GM12878 (cell line): ENCODE measurements at regions of chr1 and their contacts with region 1.

Region 1: DNA sequence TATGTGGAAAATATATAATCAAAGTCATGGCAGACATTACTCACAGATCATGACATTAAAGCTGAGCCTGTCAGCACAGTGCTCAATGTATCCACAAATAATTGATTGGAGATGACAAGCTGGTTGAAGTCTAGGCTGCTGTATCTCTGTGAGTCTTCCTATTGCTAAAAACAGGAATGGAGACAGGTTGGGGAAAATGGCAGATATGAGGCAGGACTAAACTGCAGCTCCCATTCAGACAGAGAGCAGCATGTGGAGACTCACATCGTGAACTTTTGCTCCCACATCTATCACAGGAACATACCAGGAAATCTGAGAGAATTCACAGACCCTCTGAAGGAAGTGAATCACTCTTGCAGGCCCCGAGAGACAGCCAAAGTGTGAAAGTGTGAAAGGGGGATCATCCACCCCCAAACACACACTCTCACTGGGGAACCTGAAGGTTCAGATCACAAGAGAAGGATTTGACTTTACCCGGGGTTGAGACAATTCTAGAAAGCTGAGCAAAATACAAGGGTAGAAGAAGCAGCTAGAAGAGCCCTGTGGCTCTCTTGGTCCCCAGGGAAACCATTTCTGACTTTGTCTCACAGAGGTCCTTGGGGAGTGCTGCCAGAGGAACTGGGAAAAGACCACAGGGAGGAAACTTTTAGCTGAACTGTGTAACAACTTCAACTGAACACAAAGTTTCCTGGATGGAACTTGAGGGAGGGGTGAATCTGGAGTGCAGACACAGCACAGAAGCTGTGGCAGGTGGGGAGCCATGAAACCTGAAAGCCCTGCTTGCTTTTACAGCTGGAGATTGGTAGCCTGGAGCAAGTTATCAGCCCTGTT is 173.4 kb downstream of the S1PR1 start:
- DNase-seq: peak; percentile 99
- ATAC-seq: peak; percentile 64
- H3K4me3 ChIP-seq: no peak overlapping the region
- H3K27ac ChIP-seq: peak overlapping the region; percentile 98
- H3K4me1 ChIP-seq: peaks cover 51% of the 10 kb centered on the region
- H3K27me3 ChIP-seq: no peaks in the 10 kb centered on the region
- CTCF ChIP-seq: no peak
- EP300 ChIP-seq: peak in 1 of 2 experiments; percentile 67; a peak in 1 of 4 replicates
- POLR2A ChIP-seq: peak; percentile 59
- RAD21 ChIP-seq: peak; percentile 42; the same call in 1 of the 2 replicates

Region 2: GRCh38 chr1:101293461-101294051 is 116.7 kb before region 1 on chr1:
- CTCF ChIA-PET with region 1: interaction called, 15 read pairs
- POLR2A ChIA-PET with region 1: interaction called, 7 read pairs
- RAD21 ChIA-PET with region 1: interaction called, 117 read pairs
- SMC1A ChIA-PET with region 1: interaction called, 107 read pairs
- in situ Hi-C with region 1: no loop called
- intact Hi-C with region 1: loop called (anchors 1 kb)
- DNase-seq: peak; percentile 95
- ATAC-seq: peak; percentile 76
- H3K4me3 ChIP-seq: no peak overlapping the region; the same call in 1 of the 2 replicates
- H3K27ac ChIP-seq: peak overlapping the region; percentile 54
- H3K4me1 ChIP-seq: peaks cover 34% of the 10 kb centered on the region
- H3K27me3 ChIP-seq: no peaks in the 10 kb centered on the region
- CTCF ChIP-seq: no peak
- EP300 ChIP-seq: peak in 1 of 2 experiments; percentile 91; a peak in 3 of 4 replicates
- POLR2A ChIP-seq: no peak
- RAD21 ChIP-seq: 0 out of 2 replicates have a peak, but pooled peaks have one; percentile 8

Region 3: GRCh38 chr1:101364370-101365120 is 45.7 kb before region 1 on chr1:
- CTCF ChIA-PET with region 1: interaction called, 29 read pairs
- POLR2A ChIA-PET with region 1: interaction called, 23 read pairs
- RAD21 ChIA-PET with region 1: interaction called, 219 read pairs
- SMC1A ChIA-PET with region 1: interaction called, 618 read pairs
- in situ Hi-C with region 1: no loop called
- intact Hi-C with region 1: no loop called
- DNase-seq: no peak
- ATAC-seq: peak; percentile 68
- H3K4me3 ChIP-seq: no peak overlapping the region
- H3K27ac ChIP-seq: peak overlapping the region; percentile 83
- H3K4me1 ChIP-seq: peaks cover 29% of the 10 kb centered on the region
- H3K27me3 ChIP-seq: no peaks in the 10 kb centered on the region
- CTCF ChIP-seq: no peak
- EP300 ChIP-seq: 0 out of 4 replicates have a peak, but pooled peaks of 1 of the 2 experiments have one; percentile 15
- POLR2A ChIP-seq: no peak
- RAD21 ChIP-seq: no peak

Region 4: DNA sequence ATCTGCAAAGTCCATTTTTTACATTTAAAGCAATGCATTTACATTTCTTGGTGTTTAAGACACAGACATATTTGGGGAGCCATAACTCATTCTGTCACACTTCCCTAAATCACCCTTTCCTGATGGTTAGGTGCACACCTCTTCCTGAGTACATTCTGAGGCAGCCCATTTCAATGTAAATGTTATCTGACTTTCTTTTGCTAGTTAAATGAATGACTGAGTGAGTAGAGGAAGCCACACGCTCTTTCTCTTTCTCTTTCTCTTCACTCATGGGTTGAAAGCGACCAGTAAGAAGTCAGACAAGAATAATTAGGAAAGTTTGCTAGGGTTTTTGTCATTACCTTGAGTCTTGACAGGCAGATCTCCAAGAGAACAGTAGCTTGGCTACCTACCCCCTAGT is 30.3 kb before region 1 on chr1:
- CTCF ChIA-PET with region 1: interaction called, 53 read pairs
- POLR2A ChIA-PET with region 1: interaction called, 74 read pairs
- RAD21 ChIA-PET with region 1: interaction called, 225 read pairs
- SMC1A ChIA-PET with region 1: interaction called, 618 read pairs
- in situ Hi-C with region 1: no loop called
- intact Hi-C with region 1: no loop called
- DNase-seq: peak; percentile 80
- ATAC-seq: peak; percentile 95
- H3K4me3 ChIP-seq: 0 out of 2 replicates have a peak overlapping the region, but pooled peaks have one; percentile 16
- H3K27ac ChIP-seq: peak overlapping the region; percentile 91
- H3K4me1 ChIP-seq: peaks cover 32% of the 10 kb centered on the region
- H3K27me3 ChIP-seq: no peaks in the 10 kb centered on the region
- CTCF ChIP-seq: no peak
- EP300 ChIP-seq: no peak
- POLR2A ChIP-seq: no peak
- RAD21 ChIP-seq: 0 out of 2 replicates have a peak, but pooled peaks have one; percentile 2

Region 5: GRCh38 chr1:101394041-101394440 is 16.2 kb before region 1 on chr1:
- CTCF ChIA-PET with region 1: interaction called, 71 read pairs
- POLR2A ChIA-PET with region 1: interaction called, 143 read pairs
- RAD21 ChIA-PET with region 1: interaction called, 225 read pairs
- SMC1A ChIA-PET with region 1: interaction called, 276 read pairs
- in situ Hi-C with region 1: no loop called
- intact Hi-C with region 1: loop called (anchors 1 kb)
- DNase-seq: no peak
- ATAC-seq: no peak
- H3K4me3 ChIP-seq: no peak overlapping the region
- H3K27ac ChIP-seq: no peak overlapping the region
- H3K4me1 ChIP-seq: peaks cover 23% of the 10 kb centered on the region
- H3K27me3 ChIP-seq: no peaks in the 10 kb centered on the region
- CTCF ChIP-seq: no peak
- EP300 ChIP-seq: no peak
- POLR2A ChIP-seq: no peak
- RAD21 ChIP-seq: no peak

Region 6: GRCh38 chr1:101420406-101420805 is 10.1 kb after region 1 on chr1:
- CTCF ChIA-PET with region 1: interaction called, 6 read pairs
- POLR2A ChIA-PET with region 1: interaction called, 6 read pairs
- RAD21 ChIA-PET with region 1: interaction called, 14 read pairs
- SMC1A ChIA-PET with region 1: interaction called, 81 read pairs
- in situ Hi-C with region 1: no loop called
- intact Hi-C with region 1: no loop called
- DNase-seq: no peak
- ATAC-seq: peak; percentile 18; the same call in 1 of the 3 replicates
- H3K4me3 ChIP-seq: no peak overlapping the region
- H3K27ac ChIP-seq: no peak overlapping the region
- H3K4me1 ChIP-seq: no peaks in the 10 kb centered on the region
- H3K27me3 ChIP-seq: no peaks in the 10 kb centered on the region
- CTCF ChIP-seq: no peak
- EP300 ChIP-seq: no peak
- POLR2A ChIP-seq: no peak
- RAD21 ChIP-seq: no peak

Region 7: DNA sequence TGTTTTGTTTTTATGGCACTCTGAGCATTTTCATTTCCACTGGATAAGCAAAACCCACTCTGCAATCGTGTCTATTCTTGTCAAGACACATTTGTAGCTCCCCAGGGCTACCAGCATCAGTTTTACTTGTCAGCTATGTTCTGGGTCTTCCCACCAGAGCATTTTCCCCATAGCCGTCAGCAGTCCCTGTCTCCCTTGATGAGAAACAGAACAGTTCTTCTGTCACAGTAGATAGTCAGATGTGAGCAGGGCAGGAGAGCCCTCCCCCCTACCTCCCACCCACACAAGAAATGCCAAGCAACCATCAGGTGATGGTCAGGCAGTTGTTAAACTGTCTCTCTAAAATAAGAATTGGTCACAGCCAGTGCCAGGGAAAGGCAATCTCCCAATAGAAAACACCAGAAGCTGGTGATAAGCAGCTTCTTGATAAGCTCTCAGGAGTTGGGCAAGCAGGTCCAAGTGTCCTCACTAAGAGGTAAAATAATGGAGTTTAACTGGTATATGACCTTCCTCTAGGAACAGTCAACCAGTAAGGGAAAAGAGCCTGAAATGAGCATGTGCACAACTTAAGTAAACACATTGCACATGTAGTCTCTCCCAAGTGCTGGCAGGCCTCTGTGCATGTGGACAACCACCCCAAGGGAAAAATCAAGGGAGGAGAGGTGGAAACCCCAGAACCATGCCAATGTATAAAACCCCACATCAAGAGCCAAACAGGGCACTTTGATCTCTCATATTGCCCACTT is 34.8 kb after region 1 on chr1:
- CTCF ChIA-PET with region 1: interaction called, 323 read pairs
- POLR2A ChIA-PET with region 1: interaction called, 209 read pairs
- RAD21 ChIA-PET with region 1: interaction called, 503 read pairs
- SMC1A ChIA-PET with region 1: interaction called, 507 read pairs
- in situ Hi-C with region 1: no loop called
- intact Hi-C with region 1: no loop called
- DNase-seq: no peak
- ATAC-seq: peak; percentile 33
- H3K4me3 ChIP-seq: no peak overlapping the region
- H3K27ac ChIP-seq: peak overlapping the region; percentile 62
- H3K4me1 ChIP-seq: peaks cover 20% of the 10 kb centered on the region
- H3K27me3 ChIP-seq: no peaks in the 10 kb centered on the region
- CTCF ChIP-seq: no peak
- EP300 ChIP-seq: no peak
- POLR2A ChIP-seq: no peak
- RAD21 ChIP-seq: no peak